Dorsolateral prefrontal cortex (tissue), 120 donors: ENCODE measurements at regions of chrX and their contacts with region 1.

Region 1: DNA sequence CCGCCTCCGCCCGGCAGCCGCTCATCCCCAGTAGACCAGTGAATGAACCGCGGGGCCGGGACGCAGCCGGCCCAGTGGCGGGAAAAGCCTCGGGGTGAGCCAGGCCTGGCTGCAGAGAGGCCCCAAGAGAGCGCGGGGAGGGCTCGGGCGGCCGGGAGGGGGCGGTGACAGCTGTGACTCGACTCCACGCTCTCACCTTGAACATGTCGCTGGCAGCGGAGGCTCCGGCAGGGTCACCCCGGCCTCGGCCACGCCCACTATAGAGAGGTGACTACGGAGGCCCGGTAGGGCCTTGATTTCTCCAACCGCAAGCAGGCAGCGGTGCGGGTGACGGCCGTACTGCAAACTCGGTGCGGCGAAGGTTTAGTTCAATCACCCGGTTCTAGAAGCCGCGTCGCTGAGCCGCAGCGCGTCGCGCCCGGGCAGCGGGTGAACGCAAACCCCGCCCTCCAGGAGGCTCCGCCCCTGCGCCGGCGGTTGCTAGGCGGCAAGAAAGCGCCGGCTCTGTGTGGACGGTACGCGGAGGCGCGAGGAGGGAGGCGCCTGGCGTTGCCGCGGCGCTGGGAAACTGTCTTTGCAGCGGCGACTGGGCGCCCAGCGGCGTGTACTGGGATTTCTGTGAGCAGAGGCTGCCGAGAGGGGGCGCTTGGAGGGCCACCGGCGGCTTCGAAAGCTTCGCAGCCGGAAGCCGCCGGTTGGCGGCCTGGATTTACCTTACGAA is at the starts of genes APOO and CXorf58:
- DNase-seq: peak; percentile 75 to 91 (median 86)
- H3K4me3 ChIP-seq: peak within 1 kb of the TSS; percentile 43 to 82 (median 65)
- H3K27ac ChIP-seq: peak within 1 kb of the TSS; percentile 32 to 92 (median 84)
- H3K27me3 ChIP-seq: peaks cover 0 to 37% (median 5%) of the 10 kb centered on the region in 45 donors
- CTCF ChIP-seq: peak; percentile 42 to 87 (median 77)
- total RNA-seq, gene APOO: 29.9 to 113 (median 77.0) TPM
- total RNA-seq, gene CXorf58: 0.26 to 1.4 (median 0.51) TPM in 19 of 120 experiments, not detected in the others

Region 2: GRCh38 chrX:23822397-23822796 is 85.3 kb before region 1 on chrX:
- intact Hi-C with region 1: loop called in 1 of 2 experiments (anchors 10 kb)
- DNase-seq: no peak
- H3K4me3 ChIP-seq: peak overlapping the region in 10 of 59 donors; percentile 0 to 32 (median 10)
- H3K27ac ChIP-seq: peak overlapping the region in 5 of 59 donors; percentile 1 to 57 (median 31)
- H3K27me3 ChIP-seq: peaks cover 0 to 71% (median 14%) of the 10 kb centered on the region in 45 donors
- CTCF ChIP-seq: peak in 1 of 56 donors; percentile 11

Region 3: DNA sequence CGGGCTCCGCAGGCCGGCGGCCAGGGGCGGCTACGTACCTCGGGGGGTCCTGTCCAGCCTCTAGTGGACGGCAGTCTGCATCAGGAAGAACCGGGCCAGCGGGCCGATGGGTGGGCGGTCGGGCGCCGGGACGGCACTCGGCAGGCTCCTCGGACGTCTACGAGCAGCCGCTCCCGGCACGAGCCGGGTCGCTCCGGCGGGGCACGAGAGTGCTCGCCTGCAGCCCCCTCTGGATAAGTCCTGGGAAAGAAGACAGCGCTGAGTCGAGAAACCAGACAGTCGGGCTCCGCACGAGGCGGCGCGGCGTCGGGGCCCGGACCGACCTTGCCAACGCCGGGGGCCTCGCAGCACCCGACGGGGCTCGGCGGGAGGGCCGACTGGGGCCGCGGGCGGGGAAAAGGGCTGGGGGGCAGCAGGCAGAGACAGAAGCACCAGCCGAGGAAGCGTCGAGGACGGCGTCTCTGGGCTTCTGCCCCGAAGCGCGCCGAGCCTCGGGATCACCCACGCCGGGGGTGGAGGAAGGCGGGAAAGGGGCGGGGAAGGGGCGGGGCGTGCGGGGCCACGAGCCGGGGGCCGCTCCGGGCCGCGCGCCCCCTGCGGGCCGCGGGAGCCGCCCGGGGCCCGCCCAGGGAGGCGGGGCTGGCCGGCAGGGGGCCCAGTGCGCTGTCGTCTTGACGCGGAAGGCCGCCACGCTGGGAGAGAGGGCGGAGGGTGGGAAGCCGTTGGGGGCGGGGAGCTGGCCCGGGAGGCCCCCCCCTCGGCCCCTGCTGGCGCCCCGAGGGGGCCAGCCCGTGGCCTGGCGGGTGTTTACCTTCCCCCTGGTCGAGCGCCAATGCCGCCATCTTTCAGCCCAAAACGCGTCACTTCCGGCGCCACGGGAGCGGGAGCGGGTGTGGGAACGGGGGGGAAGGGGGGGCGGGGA is 117.4 kb after region 1 on chrX:
- intact Hi-C with region 1: loop called (anchors 5 to 10 kb)
- DNase-seq: peak; percentile 68 to 84 (median 74)
- H3K4me3 ChIP-seq: peak overlapping the region; percentile 48 to 85 (median 74)
- H3K27ac ChIP-seq: peak overlapping the region; percentile 49 to 95 (median 90)
- H3K27me3 ChIP-seq: peaks cover 0 to 40% (median 8%) of the 10 kb centered on the region in 45 donors
- CTCF ChIP-seq: peak in 30 of 56 donors; percentile 7 to 54 (median 30)